ENCODE measurements at regions of chr12 and their contacts with region 1.

Region 1: DNA sequence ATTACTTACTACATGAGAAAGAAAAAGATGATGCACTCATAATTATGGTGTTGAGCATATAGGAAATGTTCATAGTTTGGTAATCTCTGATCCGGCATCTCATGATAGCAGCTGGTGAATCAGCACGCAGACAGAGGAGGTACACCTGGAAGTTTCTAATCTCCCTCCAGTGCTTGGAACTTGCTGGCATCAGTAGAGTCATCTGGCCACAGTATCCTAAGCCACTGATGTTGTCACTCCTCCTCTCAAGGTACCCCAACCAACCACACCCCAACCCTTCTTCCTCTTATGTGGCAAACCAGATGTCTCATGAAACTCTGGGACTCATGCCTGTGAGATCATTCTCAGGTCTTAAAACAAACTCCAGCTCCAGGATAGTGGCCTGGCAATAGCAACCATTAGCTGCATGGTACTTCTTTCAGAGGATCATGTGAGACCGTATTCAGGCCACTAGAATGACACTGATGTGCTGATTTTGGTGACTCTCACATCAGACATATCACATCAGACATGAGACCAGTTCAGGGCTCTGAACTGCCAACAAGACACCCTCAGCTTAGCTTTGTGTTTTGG is 143.0 kb downstream of the RASSF9 start:
- DNase-seq: no peak
- ATAC-seq: no peak
- H3K4me3 ChIP-seq: no peak overlapping the region
- H3K4me3 Mint-ChIP-seq: no peak overlapping the region
- H3K27ac ChIP-seq: no peak overlapping the region
- H3K27ac Mint-ChIP-seq: no peak overlapping the region
- H3K4me1 ChIP-seq: no peaks in the 10 kb centered on the region
- H3K4me1 Mint-ChIP-seq: no peaks in the 10 kb centered on the region
- H3K27me3 ChIP-seq: no peaks in the 10 kb centered on the region
- H3K27me3 Mint-ChIP-seq: no peaks in the 10 kb centered on the region
- CTCF ChIP-seq: no peak

Region 2: GRCh38 chr12:85617307-85618091 is 75.7 kb before region 1 on chr12:
- CTCF ChIA-PET with region 1: no interaction called
- POLR2A ChIA-PET with region 1: no interaction called
- intact Hi-C with region 1: loop called in 1 of 2 experiments (anchors 2 kb)
- DNase-seq: no peak
- ATAC-seq: no peak
- H3K4me3 ChIP-seq: no peak overlapping the region
- H3K4me3 Mint-ChIP-seq: no peak overlapping the region
- H3K27ac ChIP-seq: no peak overlapping the region
- H3K27ac Mint-ChIP-seq: no peak overlapping the region
- H3K4me1 ChIP-seq: no peaks in the 10 kb centered on the region
- H3K4me1 Mint-ChIP-seq: no peaks in the 10 kb centered on the region
- H3K27me3 ChIP-seq: no peaks in the 10 kb centered on the region
- H3K27me3 Mint-ChIP-seq: no peaks in the 10 kb centered on the region
- CTCF ChIP-seq: no peak

Region 3: DNA sequence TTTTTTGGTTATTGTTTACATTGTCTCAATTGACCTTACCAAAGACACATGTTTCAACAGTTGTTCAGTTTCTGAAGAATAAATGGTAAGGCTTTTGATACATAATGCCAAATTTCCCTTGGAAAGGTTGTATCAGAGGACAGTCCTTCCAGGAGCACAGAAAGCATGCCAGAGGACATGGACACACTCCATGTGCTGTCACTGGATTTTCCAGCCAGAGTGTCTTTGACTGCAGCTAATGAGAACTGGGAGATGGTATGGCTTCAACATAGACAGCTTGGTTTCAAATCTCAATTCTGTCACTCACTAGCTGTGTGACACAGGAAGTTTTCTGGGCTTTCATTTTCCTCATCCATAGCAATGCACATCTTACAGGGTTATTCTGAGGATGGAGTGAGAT is 201.5 kb after region 1 on chr12:
- CTCF ChIA-PET with region 1: no interaction called
- POLR2A ChIA-PET with region 1: no interaction called
- intact Hi-C with region 1: no loop called
- DNase-seq: no peak
- ATAC-seq: no peak
- H3K4me3 ChIP-seq: no peak overlapping the region
- H3K4me3 Mint-ChIP-seq: no peak overlapping the region
- H3K27ac ChIP-seq: no peak overlapping the region
- H3K27ac Mint-ChIP-seq: no peak overlapping the region
- H3K4me1 ChIP-seq: no peaks in the 10 kb centered on the region
- H3K4me1 Mint-ChIP-seq: no peaks in the 10 kb centered on the region
- H3K27me3 ChIP-seq: no peaks in the 10 kb centered on the region
- H3K27me3 Mint-ChIP-seq: no peaks in the 10 kb centered on the region
- CTCF ChIP-seq: no peak